Right cardiac atrium (tissue), 5 donors: ENCODE measurements at regions of chr10 and their contacts with region 1.

Region 1: DNA sequence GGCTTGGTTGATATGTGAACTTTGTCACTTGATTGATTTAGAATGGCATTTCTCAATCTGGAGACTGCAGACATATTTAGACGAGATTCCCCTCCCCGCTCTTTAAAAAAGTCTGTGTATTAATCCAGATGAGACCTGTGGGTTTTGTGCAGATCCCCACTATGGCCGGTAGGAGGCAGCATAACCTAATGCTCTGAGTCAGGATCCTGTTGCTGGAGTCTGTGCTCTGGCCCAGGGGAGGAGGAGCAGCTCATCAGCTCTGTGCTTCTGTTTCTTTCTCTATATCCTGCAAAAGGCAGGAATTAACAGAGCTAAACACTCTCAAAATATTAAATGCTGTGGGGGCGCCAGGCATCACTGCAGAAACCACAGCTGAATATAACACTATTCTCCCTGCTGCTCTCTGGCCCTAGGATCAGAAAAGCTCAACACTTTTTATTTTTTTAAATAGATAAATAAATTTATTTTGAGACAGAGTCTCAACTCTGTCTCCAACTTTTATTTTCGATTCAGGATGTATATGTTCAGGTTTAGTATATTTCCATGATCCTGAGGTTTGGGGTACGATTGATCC is 23.9 kb upstream of the SEPHS1 start:
- DNase-seq: peak; percentile 53 to 78 (median 64)
- ATAC-seq: peak; percentile 88 to 96
- H3K4me3 ChIP-seq: no peak overlapping the region
- H3K27ac ChIP-seq: no peak overlapping the region
- H3K4me1 ChIP-seq: no peaks in the 10 kb centered on the region
- H3K27me3 ChIP-seq: no peaks in the 10 kb centered on the region

Region 2: DNA sequence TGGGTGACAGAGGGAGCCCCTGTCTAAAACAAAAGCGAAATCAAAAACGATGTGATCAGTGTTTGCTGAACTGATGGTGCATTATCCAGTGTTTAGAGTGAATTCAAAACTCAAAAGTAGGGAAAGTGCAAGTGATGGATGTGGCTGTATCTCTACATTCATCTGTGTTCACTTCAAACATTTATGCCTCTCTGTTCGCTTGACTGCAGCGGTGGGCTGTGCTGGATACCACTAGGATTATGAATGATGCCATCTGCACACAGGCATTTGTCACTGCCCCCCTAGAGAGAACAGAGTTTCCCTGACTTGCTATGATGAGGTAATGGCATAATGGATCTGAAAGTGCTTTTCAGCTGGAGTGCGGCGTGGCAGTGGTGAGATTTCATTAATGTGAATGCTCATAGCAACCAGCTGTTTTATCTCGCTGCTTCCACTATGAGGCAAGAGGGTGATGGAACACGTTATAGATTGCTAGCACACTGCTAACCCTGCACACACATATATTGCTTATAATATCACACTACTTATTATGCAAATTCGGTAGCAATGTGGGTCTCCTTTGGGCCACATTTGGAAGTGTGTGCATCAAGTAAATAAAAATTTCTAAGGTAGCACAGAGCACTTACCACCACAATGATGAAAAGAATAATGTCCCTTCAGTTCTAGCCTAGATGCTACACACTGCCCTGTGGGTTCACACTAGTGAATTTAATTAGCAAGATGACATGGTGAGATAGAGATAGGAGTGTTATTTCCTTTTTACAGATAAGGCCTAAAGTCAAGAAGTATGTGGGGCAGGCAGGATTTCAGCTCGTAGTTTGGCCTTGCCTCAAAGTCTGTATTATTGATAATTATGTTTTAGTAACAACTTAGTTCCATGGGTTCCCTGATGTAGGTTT is 858.0 kb before region 1 on chr10:
- intact Hi-C with region 1: no loop called
- DNase-seq: peak in 1 of 3 donors; percentile 52
- ATAC-seq: peak in 1 of 2 donors; percentile 51
- H3K4me3 ChIP-seq: no peak overlapping the region
- H3K27ac ChIP-seq: no peak overlapping the region
- H3K4me1 ChIP-seq: peaks cover 3% of the 10 kb centered on the region
- H3K27me3 ChIP-seq: no peaks in the 10 kb centered on the region

Region 3: DNA sequence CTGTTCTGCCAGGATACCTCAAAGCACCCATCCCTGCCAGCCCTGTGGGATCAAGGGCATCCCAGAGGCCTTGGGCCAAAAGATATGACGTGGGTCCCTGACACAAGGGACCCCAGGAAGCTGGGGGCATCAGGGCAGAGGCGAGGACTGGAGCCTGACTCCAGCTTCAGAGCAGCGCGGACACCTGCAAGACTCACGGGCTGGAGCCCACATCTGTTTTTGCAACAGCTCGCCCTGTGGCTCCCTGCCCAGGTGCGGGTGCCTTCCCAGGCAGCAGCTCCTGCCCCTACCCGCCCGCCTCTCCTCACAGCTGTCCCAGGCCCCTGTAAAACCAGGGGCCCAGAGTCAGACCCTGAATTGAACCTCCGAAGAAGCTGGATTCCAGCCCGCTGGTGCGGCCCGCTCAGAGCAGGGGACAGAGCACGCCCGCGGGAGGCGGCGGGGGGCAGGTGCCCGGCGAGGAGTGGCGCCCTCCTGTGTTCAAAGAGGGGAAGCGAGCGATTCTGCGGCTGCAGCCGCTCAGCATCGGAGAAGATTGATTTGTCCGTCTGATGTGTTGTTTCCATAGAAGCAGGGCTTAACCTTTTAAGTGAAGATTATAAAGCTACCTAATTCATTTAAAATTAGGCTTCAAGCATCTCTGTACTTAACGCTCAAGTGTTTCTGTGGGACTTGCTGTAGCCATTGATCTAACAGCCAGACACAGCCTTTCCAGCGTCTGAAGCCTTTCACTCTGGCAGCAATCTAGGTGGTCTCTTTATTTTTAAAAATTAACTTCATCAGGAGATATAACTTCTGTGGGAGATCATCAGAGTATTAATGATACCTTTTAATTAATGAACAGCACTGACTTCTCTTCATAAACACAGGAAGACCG is 68.4 kb after region 1 on chr10:
- intact Hi-C with region 1: loop called in 3 of 4 experiments (anchors 5 kb)
- DNase-seq: peak; percentile 54 to 78 (median 69)
- ATAC-seq: peak; percentile 77 to 87
- H3K4me3 ChIP-seq: peak overlapping the region; percentile 41
- H3K27ac ChIP-seq: no peak overlapping the region
- H3K4me1 ChIP-seq: no peaks in the 10 kb centered on the region
- H3K27me3 ChIP-seq: peaks cover 2% of the 10 kb centered on the region

Region 4: GRCh38 chr10:13536674-13537366 is 164.8 kb after region 1 on chr10:
- intact Hi-C with region 1: loop called in 2 of 4 experiments (anchors 10 kb)
- DNase-seq: peak; percentile 30 to 70 (median 69)
- ATAC-seq: peak; percentile 69 to 79
- H3K4me3 ChIP-seq: no peak overlapping the region
- H3K27ac ChIP-seq: no peak overlapping the region
- H3K4me1 ChIP-seq: no peaks in the 10 kb centered on the region
- H3K27me3 ChIP-seq: no peaks in the 10 kb centered on the region

Region 5: DNA sequence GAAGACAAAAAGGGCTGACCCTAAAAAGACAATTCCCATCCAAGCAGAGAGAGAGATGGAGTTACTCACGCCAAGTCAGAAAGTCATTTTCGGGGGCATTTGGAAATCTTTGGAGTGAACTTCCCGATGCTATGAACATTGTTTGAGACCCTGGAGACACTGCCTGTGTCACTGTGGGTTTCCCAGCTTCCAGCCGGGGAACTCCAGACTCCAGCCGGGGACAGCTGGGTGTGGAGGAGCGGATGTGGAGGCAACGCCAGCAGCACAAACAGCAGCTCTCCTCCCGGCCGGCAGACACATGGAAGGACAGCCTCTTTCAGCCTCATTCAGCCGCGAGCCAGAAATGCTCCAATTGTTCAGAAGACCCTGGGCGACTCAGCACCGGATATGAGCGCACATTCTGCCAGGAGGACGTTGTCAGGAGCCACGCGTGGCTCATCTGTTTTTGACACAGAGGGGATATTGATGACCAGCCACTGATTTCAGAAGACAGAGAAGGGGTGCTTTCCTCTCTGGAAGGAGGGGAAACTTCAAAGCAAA is 312.3 kb after region 1 on chr10:
- intact Hi-C with region 1: no loop called
- DNase-seq: peak; percentile 86 to 93 (median 92)
- ATAC-seq: peak; percentile 84 to 92
- H3K4me3 ChIP-seq: no peak overlapping the region
- H3K27ac ChIP-seq: peak overlapping the region; percentile 44
- H3K4me1 ChIP-seq: peaks cover 24% of the 10 kb centered on the region
- H3K27me3 ChIP-seq: no peaks in the 10 kb centered on the region